ENCODE measurements at regions of chr9 and their contacts with region 1.

Region 1: GRCh38 chr9:132169672-132170392 is 8.0 kb downstream of the NTNG2 start:
- DNase-seq: peak; percentile 30
- H3K4me3 ChIP-seq: no peak overlapping the region
- H3K27ac ChIP-seq: no peak overlapping the region
- H3K4me1 ChIP-seq: no peaks in the 10 kb centered on the region
- H3K27me3 ChIP-seq: peaks cover 21 to 24% of the 10 kb centered on the region in 2 experiments
- CTCF ChIP-seq: peak; percentile 76 to 95
- POLR2A ChIP-seq: no peak

Region 2: DNA sequence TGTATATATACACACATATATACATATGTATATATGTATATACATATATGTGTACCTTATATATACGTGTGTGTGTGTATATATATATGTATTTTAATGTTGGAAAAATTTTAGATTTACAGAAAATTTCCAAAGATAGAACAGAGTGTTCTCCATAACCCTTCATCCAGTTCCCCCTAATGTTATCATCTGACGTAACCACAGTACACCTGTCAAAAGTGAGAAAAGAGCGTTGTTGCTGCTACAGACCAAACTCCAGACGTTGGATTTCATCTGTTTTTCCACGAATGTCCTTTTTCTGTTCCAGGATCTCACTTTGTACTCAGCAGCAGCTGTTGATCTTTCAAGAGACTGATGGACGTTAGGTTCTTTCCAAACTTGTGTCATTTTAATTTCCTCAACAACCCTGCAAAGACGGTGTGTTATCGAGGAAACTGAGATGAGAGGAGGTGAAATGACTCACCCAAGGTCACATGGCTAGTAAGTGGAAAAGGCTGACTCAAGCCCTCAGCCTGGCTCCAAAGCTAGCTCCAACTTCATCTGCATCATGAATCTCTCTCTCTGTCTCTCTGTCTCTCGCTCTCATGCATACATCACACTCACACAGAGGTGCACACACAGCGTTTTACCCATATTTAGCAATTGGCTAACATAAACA is 25.0 kb before region 1 on chr9:
- CTCF ChIA-PET with region 1: interaction called, 14 read pairs
- POLR2A ChIA-PET with region 1: interaction called, 3 read pairs
- dilution Hi-C with region 1: no loop called
- intact Hi-C with region 1: no loop called
- DNase-seq: peak; percentile 32
- H3K4me3 ChIP-seq: no peak overlapping the region
- H3K27ac ChIP-seq: no peak overlapping the region
- H3K4me1 ChIP-seq: no peaks in the 10 kb centered on the region
- H3K27me3 ChIP-seq: peaks cover 14 to 19% of the 10 kb centered on the region in 2 experiments
- CTCF ChIP-seq: no peak
- POLR2A ChIP-seq: no peak

Region 3: GRCh38 chr9:132182314-132183091 is 12.7 kb after region 1 on chr9:
- CTCF ChIA-PET with region 1: interaction called, 21 read pairs
- POLR2A ChIA-PET with region 1: no interaction called
- dilution Hi-C with region 1: no loop called
- intact Hi-C with region 1: no loop called
- DNase-seq: no peak
- H3K4me3 ChIP-seq: no peak overlapping the region
- H3K27ac ChIP-seq: no peak overlapping the region
- H3K4me1 ChIP-seq: no peaks in the 10 kb centered on the region
- H3K27me3 ChIP-seq: peaks cover 19 to 21% of the 10 kb centered on the region in 2 experiments
- CTCF ChIP-seq: peak in 1 of 2 donors; percentile 22
- POLR2A ChIP-seq: no peak

Region 4: DNA sequence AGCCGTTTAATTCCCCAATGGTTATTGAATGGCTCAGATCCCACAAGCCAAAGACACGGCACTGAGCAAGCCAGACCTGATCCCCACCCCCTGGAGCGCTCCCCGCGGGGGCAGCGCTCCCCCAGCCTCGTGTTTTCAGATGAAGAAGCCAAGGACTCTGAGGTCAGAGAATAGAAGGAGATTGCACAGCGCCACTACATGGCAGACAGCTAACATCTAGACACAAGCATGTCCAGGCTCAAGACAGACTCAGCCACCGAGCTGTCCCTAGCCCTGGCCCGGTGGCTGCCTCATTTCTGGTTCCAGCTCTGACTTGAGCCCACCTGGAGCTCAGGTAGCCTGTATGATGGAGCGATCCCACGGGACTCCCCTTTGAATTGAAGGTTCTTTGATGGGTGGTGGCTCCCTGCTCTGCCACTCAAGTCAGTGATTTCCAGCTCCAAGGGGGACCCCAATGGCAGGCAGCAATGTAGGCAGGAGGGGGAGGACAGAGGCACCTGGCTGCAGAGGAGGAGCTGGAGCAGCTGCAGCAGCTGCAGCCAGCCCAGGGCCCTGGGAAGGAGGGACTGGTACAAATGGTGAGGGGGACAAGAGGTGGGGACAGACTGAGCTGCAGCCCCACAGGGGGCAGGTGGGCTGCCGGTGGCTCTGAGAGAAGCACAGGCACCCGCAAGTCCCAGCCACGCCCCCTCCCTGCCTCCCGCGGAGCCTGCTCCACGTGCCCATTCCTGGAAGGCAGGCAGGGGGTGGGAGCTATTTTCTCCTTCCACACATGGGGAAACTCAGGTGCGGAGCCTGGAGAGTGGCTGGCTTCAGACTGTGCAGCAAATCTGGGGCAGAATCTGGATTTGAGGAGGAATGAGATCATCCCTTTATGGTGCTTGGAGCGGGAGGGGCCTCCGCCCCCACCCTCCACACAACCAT is 32.2 kb after region 1 on chr9:
- CTCF ChIA-PET with region 1: interaction called, 12 read pairs
- POLR2A ChIA-PET with region 1: no interaction called
- dilution Hi-C with region 1: no loop called
- intact Hi-C with region 1: no loop called
- DNase-seq: no peak
- H3K4me3 ChIP-seq: no peak overlapping the region
- H3K27ac ChIP-seq: no peak overlapping the region
- H3K4me1 ChIP-seq: no peaks in the 10 kb centered on the region
- H3K27me3 ChIP-seq: peaks cover 0 to 2% of the 10 kb centered on the region in 2 experiments
- CTCF ChIP-seq: no peak
- POLR2A ChIP-seq: no peak

Region 5: GRCh38 chr9:132240753-132241493 is 71.1 kb after region 1 on chr9:
- CTCF ChIA-PET with region 1: interaction called, 408 read pairs
- POLR2A ChIA-PET with region 1: no interaction called
- dilution Hi-C with region 1: no loop called
- intact Hi-C with region 1: loop called (anchors 1 kb)
- DNase-seq: peak; percentile 92
- H3K4me3 ChIP-seq: peak overlapping the region; percentile 41 to 63 (median 54)
- H3K27ac ChIP-seq: no peak overlapping the region
- H3K4me1 ChIP-seq: peaks cover 7% of the 10 kb centered on the region
- H3K27me3 ChIP-seq: peaks cover 4 to 5% of the 10 kb centered on the region in 2 experiments
- CTCF ChIP-seq: no peak
- POLR2A ChIP-seq: no peak

Region 6: GRCh38 chr9:132260846-132261245 is 91.0 kb after region 1 on chr9:
- CTCF ChIA-PET with region 1: interaction called, 10 read pairs
- POLR2A ChIA-PET with region 1: no interaction called
- dilution Hi-C with region 1: no loop called
- intact Hi-C with region 1: no loop called
- DNase-seq: peak; percentile 55
- H3K4me3 ChIP-seq: no peak overlapping the region
- H3K27ac ChIP-seq: peak overlapping the region; percentile 40
- H3K4me1 ChIP-seq: peaks cover 20% of the 10 kb centered on the region
- H3K27me3 ChIP-seq: no peaks in the 10 kb centered on the region
- CTCF ChIP-seq: no peak
- POLR2A ChIP-seq: no peak

Region 7: GRCh38 chr9:132752877-132753592 is 583.2 kb after region 1 on chr9:
- CTCF ChIA-PET with region 1: no interaction called
- POLR2A ChIA-PET with region 1: no interaction called
- dilution Hi-C with region 1: no loop called
- intact Hi-C with region 1: no loop called
- DNase-seq: no peak
- H3K4me3 ChIP-seq: no peak overlapping the region
- H3K27ac ChIP-seq: no peak overlapping the region
- H3K4me1 ChIP-seq: no peaks in the 10 kb centered on the region
- H3K27me3 ChIP-seq: peaks cover 0 to 3% of the 10 kb centered on the region in 2 experiments
- CTCF ChIP-seq: no peak
- POLR2A ChIP-seq: no peak

Measured in endothelial cell of umbilical vein (primary cell).